ENCODE measurements at regions of chr18 and their contacts with region 1.

Region 1: GRCh38 chr18:61820882-61821281 is 71.9 kb downstream of the RNF152 start:
- DNase-seq: peak; percentile 31
- H3K4me3 ChIP-seq: no peak overlapping the region
- H3K27ac ChIP-seq: no peak overlapping the region
- H3K4me1 ChIP-seq: peaks cover 14% of the 10 kb centered on the region
- H3K27me3 ChIP-seq: no peaks in the 10 kb centered on the region
- CTCF ChIP-seq: no peak

Region 2: GRCh38 chr18:61738488-61738887 is 82.4 kb before region 1 on chr18:
- CTCF ChIA-PET with region 1: no interaction called
- dilution Hi-C with region 1: no loop called
- in situ Hi-C with region 1: no loop called
- intact Hi-C with region 1: no loop called
- DNase-seq: no peak
- H3K4me3 ChIP-seq: no peak overlapping the region
- H3K27ac ChIP-seq: no peak overlapping the region
- H3K4me1 ChIP-seq: no peaks in the 10 kb centered on the region
- H3K27me3 ChIP-seq: no peaks in the 10 kb centered on the region
- CTCF ChIP-seq: no peak

Region 3: GRCh38 chr18:61785588-61785987 is 35.3 kb before region 1 on chr18:
- CTCF ChIA-PET with region 1: no interaction called
- dilution Hi-C with region 1: no loop called
- in situ Hi-C with region 1: no loop called
- intact Hi-C with region 1: loop called (anchors 1 kb)
- DNase-seq: no peak
- H3K4me3 ChIP-seq: no peak overlapping the region
- H3K27ac ChIP-seq: no peak overlapping the region
- H3K4me1 ChIP-seq: no peaks in the 10 kb centered on the region
- H3K27me3 ChIP-seq: no peaks in the 10 kb centered on the region
- CTCF ChIP-seq: no peak

Region 4: GRCh38 chr18:61870151-61870550 is 49.3 kb after region 1 on chr18:
- CTCF ChIA-PET with region 1: no interaction called
- dilution Hi-C with region 1: no loop called
- in situ Hi-C with region 1: no loop called
- intact Hi-C with region 1: no loop called
- DNase-seq: no peak
- H3K4me3 ChIP-seq: no peak overlapping the region
- H3K27ac ChIP-seq: no peak overlapping the region
- H3K4me1 ChIP-seq: no peaks in the 10 kb centered on the region
- H3K27me3 ChIP-seq: no peaks in the 10 kb centered on the region
- CTCF ChIP-seq: no peak